Transverse colon (tissue), 4 donors: ENCODE measurements at regions of chr21 and their contacts with region 1.

Region 1: GRCh38 chr21:40151611-40152010 is 284.4 kb downstream of the PCP4 start:
- DNase-seq: no peak
- H3K4me3 ChIP-seq: no peak overlapping the region
- H3K27ac ChIP-seq: no peak overlapping the region
- H3K4me1 ChIP-seq: no peaks in the 10 kb centered on the region
- H3K27me3 ChIP-seq: no peaks in the 10 kb centered on the region
- CTCF ChIP-seq: no peak
- EP300 ChIP-seq: no peak
- POLR2A ChIP-seq: no peak

Region 2: GRCh38 chr21:39984286-39984991 is 167.2 kb before region 1 on chr21:
- in situ Hi-C with region 1: no loop called
- intact Hi-C with region 1: no loop called
- DNase-seq: no peak
- H3K4me3 ChIP-seq: no peak overlapping the region
- H3K27ac ChIP-seq: no peak overlapping the region
- H3K4me1 ChIP-seq: no peaks in the 10 kb centered on the region
- H3K27me3 ChIP-seq: no peaks in the 10 kb centered on the region
- CTCF ChIP-seq: no peak
- EP300 ChIP-seq: no peak
- POLR2A ChIP-seq: no peak

Region 3: DNA sequence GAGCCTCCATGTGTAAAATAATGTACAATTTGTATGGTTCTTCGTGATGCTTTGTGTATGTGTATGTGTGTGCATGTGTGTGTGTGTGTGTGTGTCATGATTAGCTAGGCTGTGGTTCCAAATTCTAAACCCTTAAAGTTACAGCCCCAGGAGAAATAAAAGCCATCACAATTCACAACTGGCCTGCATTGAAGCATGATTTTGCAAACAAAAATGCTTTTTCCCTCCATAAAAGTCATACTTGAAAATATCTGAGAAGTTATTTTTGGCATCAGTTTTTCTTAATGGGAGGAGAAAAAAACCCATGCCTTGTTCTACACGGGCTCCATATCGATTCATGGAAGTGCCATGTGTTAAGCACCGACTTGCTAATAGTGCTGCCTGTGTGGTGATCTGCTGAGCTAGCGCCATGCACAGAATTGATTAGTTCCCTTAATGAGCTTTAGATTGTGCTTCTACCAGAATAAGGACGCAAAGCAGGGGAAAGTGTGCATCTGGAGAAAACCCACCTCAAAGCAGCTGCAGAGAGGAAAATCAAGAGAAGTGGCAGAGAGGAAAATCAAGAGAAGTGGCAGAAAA is 488.1 kb after region 1 on chr21:
- in situ Hi-C with region 1: no loop called
- intact Hi-C with region 1: no loop called
- DNase-seq: no peak
- H3K4me3 ChIP-seq: no peak overlapping the region
- H3K27ac ChIP-seq: no peak overlapping the region
- H3K4me1 ChIP-seq: no peaks in the 10 kb centered on the region
- H3K27me3 ChIP-seq: no peaks in the 10 kb centered on the region
- CTCF ChIP-seq: no peak
- EP300 ChIP-seq: no peak
- POLR2A ChIP-seq: no peak

Region 4: GRCh38 chr21:41059876-41060275 is 908.3 kb after region 1 on chr21:
- in situ Hi-C with region 1: loop called in 3 of 4 experiments (anchors 25 kb)
- intact Hi-C with region 1: loop called (anchors 5 kb)
- DNase-seq: no peak
- H3K4me3 ChIP-seq: no peak overlapping the region
- H3K27ac ChIP-seq: no peak overlapping the region
- H3K4me1 ChIP-seq: no peaks in the 10 kb centered on the region
- H3K27me3 ChIP-seq: no peaks in the 10 kb centered on the region
- CTCF ChIP-seq: no peak
- EP300 ChIP-seq: no peak
- POLR2A ChIP-seq: no peak